AG04449 (cell line): ENCODE measurements at regions of chrX and their contacts with region 1.

Region 1: GRCh38 chrX:40543661-40544328 is 37.0 kb upstream of the ATP6AP2 start:
- DNase-seq: no peak
- H3K4me3 ChIP-seq: no peak overlapping the region
- CTCF ChIP-seq: peak; percentile 25

Region 2: DNA sequence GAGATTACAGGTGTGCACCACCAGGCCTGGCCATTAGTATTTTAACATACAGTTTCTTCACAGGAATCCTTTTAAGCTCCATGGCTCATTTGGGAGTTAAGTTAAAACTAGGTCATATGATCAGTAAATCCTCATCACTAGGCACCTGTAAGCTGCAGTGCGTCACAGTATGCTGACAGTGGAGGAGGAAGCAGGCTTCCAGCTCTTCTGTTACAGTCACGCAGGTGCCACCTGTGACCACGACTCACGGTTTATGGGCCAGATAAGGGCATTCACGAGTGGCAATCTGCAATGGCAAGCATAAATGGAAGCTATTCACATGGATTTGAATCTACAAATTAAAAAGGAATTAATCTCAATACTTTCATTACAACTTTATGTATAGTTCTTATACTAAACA is 316.7 kb before region 1 on chrX:
- CTCF ChIA-PET with region 1: no interaction called
- POLR2A ChIA-PET with region 1: no interaction called
- DNase-seq: no peak
- H3K4me3 ChIP-seq: no peak overlapping the region
- CTCF ChIP-seq: no peak

Region 3: GRCh38 chrX:40392599-40392998 is 151.2 kb before region 1 on chrX:
- CTCF ChIA-PET with region 1: no interaction called
- POLR2A ChIA-PET with region 1: no interaction called
- DNase-seq: no peak
- H3K4me3 ChIP-seq: no peak overlapping the region
- CTCF ChIP-seq: no peak

Region 4: DNA sequence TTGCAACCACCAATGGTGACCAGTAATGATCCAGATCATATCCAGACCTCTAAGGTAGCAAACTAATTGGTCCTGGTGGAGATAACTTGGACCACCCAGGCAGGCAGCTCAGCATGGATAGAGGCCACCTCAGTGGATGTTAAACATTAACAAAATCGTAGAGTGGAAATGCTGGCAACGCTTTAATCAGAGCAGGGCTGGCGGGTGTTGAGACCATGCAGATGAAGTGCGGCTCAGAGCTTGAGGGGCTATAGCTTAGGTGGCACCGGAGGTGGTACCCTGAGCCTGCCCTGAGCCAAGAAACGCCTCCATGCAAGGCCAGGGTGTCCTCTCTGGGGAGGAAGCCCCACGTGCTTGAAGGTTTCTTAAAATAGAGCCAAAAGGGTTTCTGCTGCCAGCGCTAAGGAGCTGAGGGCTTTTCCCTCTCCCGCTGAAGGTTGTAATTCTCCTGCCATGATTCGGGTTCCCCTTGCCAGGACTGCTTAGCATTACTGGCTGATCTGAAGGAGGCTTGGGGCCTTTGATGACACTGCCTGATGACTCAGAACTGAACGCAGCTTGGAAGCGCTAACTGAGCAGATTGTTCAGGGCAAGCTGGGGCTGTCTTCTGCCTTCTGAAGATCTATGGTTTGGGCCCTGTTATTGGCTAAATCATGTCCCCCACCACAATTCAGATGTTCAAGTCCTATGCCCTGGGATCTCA is 140.8 kb before region 1 on chrX:
- CTCF ChIA-PET with region 1: no interaction called
- POLR2A ChIA-PET with region 1: no interaction called
- DNase-seq: peak; percentile 3
- H3K4me3 ChIP-seq: no peak overlapping the region
- CTCF ChIP-seq: no peak

Region 5: DNA sequence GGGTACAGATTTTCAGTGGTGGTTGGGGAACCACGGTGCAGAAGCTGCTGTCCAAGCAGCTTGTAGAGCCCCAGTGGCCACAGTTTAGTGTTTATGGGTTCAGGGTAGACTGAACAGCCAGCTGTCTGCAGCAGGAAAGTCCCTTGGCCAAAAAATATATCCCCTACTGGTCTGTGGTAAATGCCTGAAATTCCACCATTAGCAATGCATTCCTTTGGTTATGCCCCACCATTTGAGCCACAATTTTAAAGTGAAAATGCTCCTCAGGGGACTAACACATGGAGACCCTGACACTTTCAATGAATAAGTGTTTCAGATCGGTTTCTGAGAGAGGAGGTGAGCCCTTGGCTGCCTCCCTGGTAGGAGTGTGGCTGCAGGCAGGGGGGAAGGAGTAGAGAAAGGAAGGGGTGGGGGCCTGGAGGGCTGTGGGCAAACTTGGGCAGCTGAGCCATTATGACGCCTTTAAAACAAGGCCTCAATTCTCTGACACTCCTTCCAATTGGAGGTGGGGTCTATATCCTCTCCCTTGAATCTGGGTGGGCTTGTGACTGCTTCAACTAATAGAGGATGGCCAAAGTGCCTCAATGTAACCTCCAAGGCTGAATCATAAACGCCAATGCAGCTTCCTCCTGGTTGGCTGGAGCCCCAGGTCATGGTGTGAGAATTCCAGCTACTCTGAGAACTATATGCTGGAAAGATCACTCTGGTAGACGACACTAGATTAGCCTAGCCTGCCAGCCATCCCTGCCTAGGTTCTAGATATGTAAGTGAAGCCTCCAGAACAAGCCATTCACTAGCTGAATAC is 38.8 kb before region 1 on chrX:
- CTCF ChIA-PET with region 1: interaction called, 13 read pairs
- POLR2A ChIA-PET with region 1: no interaction called
- DNase-seq: peak; percentile 80
- H3K4me3 ChIP-seq: no peak overlapping the region
- CTCF ChIP-seq: no peak

Region 6: GRCh38 chrX:41288641-41289040 is 744.8 kb after region 1 on chrX:
- CTCF ChIA-PET with region 1: no interaction called
- POLR2A ChIA-PET with region 1: no interaction called
- DNase-seq: no peak
- H3K4me3 ChIP-seq: no peak overlapping the region
- CTCF ChIP-seq: no peak